Activated CD4-positive, alpha-beta T cell treated with anti-CD3 and anti-CD28 coated beads for 36 hours (primary cell): ENCODE measurements at regions of chr1 and their contacts with region 1.

Region 1: GRCh38 chr1:203326830-203327683 is 21.7 kb downstream of the BTG2 start:
- DNase-seq: peak; percentile 97
- ATAC-seq: peak; percentile 84
- H3K4me3 Mint-ChIP-seq: peak overlapping the region; percentile 72
- H3K27ac Mint-ChIP-seq: peak overlapping the region; percentile 96
- H3K4me1 Mint-ChIP-seq: peaks cover 66% of the 10 kb centered on the region
- H3K27me3 Mint-ChIP-seq: no peaks in the 10 kb centered on the region

Region 2: DNA sequence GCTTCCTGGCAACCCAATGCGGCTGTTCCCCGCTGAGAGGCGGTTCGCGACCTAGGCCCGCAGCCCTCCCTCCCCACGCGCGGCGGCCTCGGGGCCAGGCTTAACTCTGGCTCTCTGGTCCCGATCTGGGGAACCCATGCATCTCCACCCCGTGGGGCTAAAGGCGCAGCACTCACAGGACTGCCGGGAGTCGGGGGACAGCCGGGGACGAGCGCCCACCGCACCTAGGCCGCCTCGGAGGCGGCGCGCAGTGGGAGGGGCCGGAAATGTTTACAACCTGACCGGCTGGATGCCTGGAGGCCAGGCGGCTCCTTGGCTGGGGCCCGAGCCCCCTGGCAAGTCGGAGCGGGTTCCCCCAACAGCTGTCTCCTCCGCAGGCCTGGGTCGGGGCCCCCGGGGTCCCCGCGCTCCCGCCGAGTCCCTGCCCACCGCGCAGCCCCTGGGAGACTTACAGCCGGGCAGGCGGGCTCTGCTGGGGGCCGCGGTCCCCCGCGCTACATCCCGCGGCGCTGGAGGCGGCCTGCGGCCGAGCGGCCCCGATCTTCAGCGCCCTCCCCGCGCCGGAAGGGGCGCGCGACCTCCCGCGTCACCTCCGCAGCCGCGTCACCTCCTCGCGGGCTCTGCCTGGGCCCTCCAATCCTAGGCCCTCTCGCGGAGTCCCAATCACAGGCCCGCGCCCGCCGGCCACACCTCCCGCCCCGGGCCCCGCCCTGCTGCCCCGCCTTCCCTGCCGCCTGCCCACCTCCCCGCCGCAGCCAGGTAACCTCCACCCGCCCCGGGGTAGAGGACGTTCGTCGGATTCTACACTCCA is 369.1 kb before region 1 on chr1 and contains the start of gene ADIPOR1:
- CTCF ChIA-PET with region 1: no interaction called
- POLR2A ChIA-PET with region 1: no interaction called
- intact Hi-C with region 1: loop called in 1 of 2 experiments (anchors 5 kb)
- DNase-seq: peak; percentile 96
- ATAC-seq: peak; percentile 100
- H3K4me3 Mint-ChIP-seq: peak within 1 kb of the TSS; percentile 83
- H3K27ac Mint-ChIP-seq: peak within 1 kb of the TSS; percentile 82
- H3K4me1 Mint-ChIP-seq: peaks cover 46% of the 10 kb centered on the region
- H3K27me3 Mint-ChIP-seq: no peaks in the 10 kb centered on the region
- total RNA-seq, gene ADIPOR1: 65.4 to 85.1 TPM

Region 3: GRCh38 chr1:203196371-203196770 is 130.7 kb before region 1 on chr1:
- CTCF ChIA-PET with region 1: no interaction called
- POLR2A ChIA-PET with region 1: no interaction called
- intact Hi-C with region 1: no loop called
- DNase-seq: no peak
- ATAC-seq: no peak
- H3K4me3 Mint-ChIP-seq: no peak overlapping the region
- H3K27ac Mint-ChIP-seq: no peak overlapping the region
- H3K4me1 Mint-ChIP-seq: no peaks in the 10 kb centered on the region
- H3K27me3 Mint-ChIP-seq: peaks cover 10% of the 10 kb centered on the region

Region 4: GRCh38 chr1:203290261-203291089 is 36.6 kb before region 1 on chr1:
- CTCF ChIA-PET with region 1: interaction called, 18 read pairs
- POLR2A ChIA-PET with region 1: interaction called, 28 read pairs
- intact Hi-C with region 1: loop called (anchors 1 kb)
- DNase-seq: peak; percentile 99
- ATAC-seq: peak; percentile 50
- H3K4me3 Mint-ChIP-seq: peak overlapping the region; percentile 78
- H3K27ac Mint-ChIP-seq: peak overlapping the region; percentile 98
- H3K4me1 Mint-ChIP-seq: peaks cover 83% of the 10 kb centered on the region
- H3K27me3 Mint-ChIP-seq: no peaks in the 10 kb centered on the region

Region 5: DNA sequence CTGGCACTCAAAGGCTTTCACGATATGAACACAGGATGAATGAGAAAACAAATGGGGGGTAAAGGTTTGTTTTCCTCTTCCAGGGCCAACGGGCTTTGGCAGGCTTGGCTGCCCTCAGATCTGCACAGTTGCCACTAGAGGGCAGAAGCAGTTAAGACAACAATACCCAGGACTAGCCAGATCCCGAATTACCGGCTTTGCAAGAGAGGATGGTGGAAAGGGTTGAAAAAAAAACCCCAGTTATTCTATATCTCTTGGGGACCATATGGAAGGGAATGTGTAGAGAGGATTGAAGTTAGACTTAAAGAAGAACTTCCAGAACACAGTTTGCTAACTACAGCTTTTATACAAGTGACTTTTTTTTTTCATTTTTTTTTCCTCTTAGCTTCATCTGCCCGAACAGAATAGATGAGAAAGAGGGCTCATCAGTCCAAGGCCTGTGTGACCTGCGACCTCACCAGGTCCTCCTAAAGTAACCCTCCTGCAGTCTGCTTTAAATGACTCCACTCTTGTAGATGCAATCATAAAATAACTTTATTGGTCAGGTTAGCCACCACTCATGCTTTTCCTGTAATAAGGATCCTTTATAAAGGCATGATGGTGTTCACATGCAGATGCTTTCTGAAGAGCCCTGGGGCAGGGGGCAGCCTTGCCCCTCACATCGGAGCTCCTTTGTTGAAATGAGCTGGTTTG is 13.2 kb after region 1 on chr1:
- CTCF ChIA-PET with region 1: interaction called, 154 read pairs
- POLR2A ChIA-PET with region 1: interaction called, 4 read pairs
- intact Hi-C with region 1: loop called in 1 of 2 experiments (anchors 1 kb)
- DNase-seq: peak; percentile 75
- ATAC-seq: peak; percentile 76
- H3K4me3 Mint-ChIP-seq: no peak overlapping the region
- H3K27ac Mint-ChIP-seq: no peak overlapping the region
- H3K4me1 Mint-ChIP-seq: peaks cover 27% of the 10 kb centered on the region
- H3K27me3 Mint-ChIP-seq: peaks cover 7% of the 10 kb centered on the region

Region 6: DNA sequence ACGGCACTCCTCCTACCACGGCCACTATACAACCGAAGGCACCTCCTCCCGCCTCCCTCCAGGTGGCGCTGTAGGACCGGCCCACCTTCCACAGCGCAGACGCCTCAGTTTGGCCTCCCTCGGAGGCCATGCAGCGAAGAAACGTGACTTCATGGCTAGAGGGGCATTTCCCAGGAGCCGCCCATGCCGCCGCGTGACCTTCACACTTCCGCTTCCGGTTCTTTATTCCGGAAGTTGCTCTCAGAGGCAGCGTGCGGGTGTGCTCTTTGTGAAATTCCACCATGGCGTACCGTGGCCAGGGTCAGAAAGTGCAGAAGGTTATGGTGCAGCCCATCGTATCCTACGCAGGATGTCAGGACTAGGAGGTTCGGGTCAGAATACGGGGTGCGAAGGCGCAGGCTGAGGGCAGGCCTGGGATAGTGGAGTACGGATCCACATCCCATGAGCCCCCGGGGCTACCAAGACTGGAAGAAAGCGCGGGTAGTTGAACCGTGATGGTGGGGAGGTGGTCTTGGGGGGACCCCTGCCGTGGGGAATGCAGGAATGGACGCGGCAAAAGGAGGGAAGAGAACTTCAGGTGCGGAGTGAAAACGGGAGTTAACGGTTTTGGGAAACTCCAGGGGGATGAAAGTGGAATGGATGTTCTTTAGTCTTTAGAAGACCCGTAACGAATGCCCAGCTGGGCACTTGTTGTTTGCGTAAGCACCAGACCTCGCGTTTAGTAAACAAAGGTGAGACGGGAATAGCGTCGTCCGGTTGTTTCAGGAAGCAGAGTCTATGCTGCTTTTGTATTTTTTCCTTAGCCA is 534.5 kb after region 1 on chr1 and contains the start of gene SNRPE:
- CTCF ChIA-PET with region 1: no interaction called
- POLR2A ChIA-PET with region 1: no interaction called
- intact Hi-C with region 1: loop called in 1 of 2 experiments (anchors 5 kb)
- DNase-seq: peak; percentile 98
- ATAC-seq: peak; percentile 98
- H3K4me3 Mint-ChIP-seq: peak within 1 kb of the TSS; percentile 100
- H3K27ac Mint-ChIP-seq: peak within 1 kb of the TSS; percentile 99
- H3K4me1 Mint-ChIP-seq: peaks cover 8% of the 10 kb centered on the region
- H3K27me3 Mint-ChIP-seq: no peaks in the 10 kb centered on the region
- total RNA-seq, gene SNRPE: 211 to 416 TPM